CD8-positive, alpha-beta T cell (primary cell): ENCODE measurements at regions of chr17 and their contacts with region 1.

Region 1: DNA sequence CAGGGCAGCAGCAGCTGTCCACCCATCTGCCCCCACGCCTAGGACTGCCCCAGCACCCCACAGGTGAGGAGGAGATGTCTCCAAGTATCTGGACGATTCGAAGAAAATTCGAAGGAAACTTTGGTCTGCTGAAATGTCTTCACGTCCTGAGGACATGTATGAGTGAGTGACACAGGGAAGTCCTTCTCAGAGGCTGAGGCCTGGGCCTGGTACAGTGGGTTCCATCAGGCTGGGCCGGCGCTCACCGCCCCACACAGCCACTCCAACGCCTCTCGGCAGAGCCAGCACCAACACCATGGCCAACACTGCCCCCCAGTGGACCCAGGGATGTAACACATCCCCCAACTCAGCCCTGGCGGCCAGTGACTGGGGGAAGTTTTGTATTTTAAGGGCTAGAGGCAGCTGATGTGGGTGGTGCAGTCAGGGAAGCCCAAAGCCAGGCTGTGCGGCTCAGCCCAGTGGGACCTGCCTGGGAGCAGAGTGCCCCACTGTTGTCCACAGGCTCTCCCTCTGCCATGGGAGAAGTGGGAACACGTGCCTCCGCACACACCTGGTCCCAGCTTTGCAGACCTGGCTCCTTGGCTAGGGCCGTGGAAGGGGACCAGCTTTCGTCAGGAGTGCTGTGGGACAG is 55.8 kb upstream of the FASN start:
- DNase-seq: peak; percentile 71 to 92 (median 84)
- ATAC-seq: peak; percentile 100
- H3K4me3 ChIP-seq: no peak overlapping the region
- H3K4me3 Mint-ChIP-seq: no peak overlapping the region
- H3K27ac ChIP-seq: no peak overlapping the region
- H3K27ac Mint-ChIP-seq: peak overlapping the region; percentile 57
- H3K4me1 ChIP-seq: peaks cover 7% of the 10 kb centered on the region
- H3K4me1 Mint-ChIP-seq: peaks cover 5% of the 10 kb centered on the region
- H3K27me3 ChIP-seq: no peaks in the 10 kb centered on the region
- H3K27me3 Mint-ChIP-seq: no peaks in the 10 kb centered on the region
- CTCF ChIP-seq: peak; percentile 98

Region 2: GRCh38 chr17:82051776-82052637 is 101.9 kb before region 1 on chr17 and contains the starts of genes GPS1 and RFNG:
- CTCF ChIA-PET with region 1: interaction called, 4 read pairs
- POLR2A ChIA-PET with region 1: no interaction called
- intact Hi-C with region 1: loop called in 1 of 2 experiments (anchors 1 kb)
- DNase-seq: peak; percentile 49 to 87 (median 82)
- ATAC-seq: peak; percentile 92
- H3K4me3 ChIP-seq: peak within 1 kb of the TSS; percentile 63 to 67
- H3K4me3 Mint-ChIP-seq: peak within 1 kb of the TSS; percentile 83
- H3K27ac ChIP-seq: peak within 1 kb of the TSS; percentile 25 to 30
- H3K27ac Mint-ChIP-seq: peak within 1 kb of the TSS; percentile 72
- H3K4me1 ChIP-seq: peaks cover 29% of the 10 kb centered on the region
- H3K4me1 Mint-ChIP-seq: peaks cover 18% of the 10 kb centered on the region
- H3K27me3 ChIP-seq: no peaks in the 10 kb centered on the region
- H3K27me3 Mint-ChIP-seq: no peaks in the 10 kb centered on the region
- CTCF ChIP-seq: no peak
- total RNA-seq, gene GPS1: 72.0 to 72.8 TPM
- total RNA-seq, gene RFNG: 26.2 to 27.2 TPM

Region 3: GRCh38 chr17:82105882-82106687 is 47.8 kb before region 1 on chr17:
- CTCF ChIA-PET with region 1: interaction called, 11 read pairs
- POLR2A ChIA-PET with region 1: interaction called, 4 read pairs
- intact Hi-C with region 1: no loop called
- DNase-seq: peak in 8 of 9 experiments; percentile 38 to 80 (median 60)
- ATAC-seq: peak; percentile 65
- H3K4me3 ChIP-seq: peak overlapping the region; percentile 59 to 64
- H3K4me3 Mint-ChIP-seq: peak overlapping the region; percentile 87
- H3K27ac ChIP-seq: peak overlapping the region; percentile 65 to 89
- H3K27ac Mint-ChIP-seq: peak overlapping the region; percentile 96
- H3K4me1 ChIP-seq: peaks cover 22% of the 10 kb centered on the region
- H3K4me1 Mint-ChIP-seq: peaks cover 23% of the 10 kb centered on the region
- H3K27me3 ChIP-seq: no peaks in the 10 kb centered on the region
- H3K27me3 Mint-ChIP-seq: no peaks in the 10 kb centered on the region
- CTCF ChIP-seq: peak; percentile 28

Region 4: DNA sequence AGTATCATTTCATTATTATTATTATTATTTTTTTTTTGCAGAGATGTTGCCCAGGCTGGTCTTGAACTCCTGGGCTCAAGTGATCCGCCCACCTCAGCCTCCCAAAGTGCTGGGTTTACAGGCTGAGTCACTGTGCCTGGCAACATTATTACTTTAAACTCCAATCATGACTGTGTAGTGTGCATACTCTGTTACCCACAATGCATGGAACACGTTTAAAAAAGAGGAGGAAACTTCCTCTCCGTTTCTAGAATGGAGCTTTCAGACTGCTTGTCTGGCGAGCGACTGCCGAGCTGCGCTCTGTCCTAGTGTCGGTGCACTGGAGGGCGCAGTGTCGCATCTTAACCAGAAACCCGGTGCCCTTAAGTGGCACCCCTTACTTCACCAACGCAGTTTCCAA is 33.7 kb before region 1 on chr17:
- CTCF ChIA-PET with region 1: interaction called, 34 read pairs
- POLR2A ChIA-PET with region 1: no interaction called
- intact Hi-C with region 1: loop called (anchors 1 kb)
- DNase-seq: peak in 3 of 9 experiments; percentile 26 to 76 (median 40)
- ATAC-seq: peak; percentile 88
- H3K4me3 ChIP-seq: no peak overlapping the region
- H3K4me3 Mint-ChIP-seq: peak overlapping the region; percentile 56
- H3K27ac ChIP-seq: no peak overlapping the region
- H3K27ac Mint-ChIP-seq: peak overlapping the region; percentile 87
- H3K4me1 ChIP-seq: peaks cover 58% of the 10 kb centered on the region
- H3K4me1 Mint-ChIP-seq: peaks cover 59% of the 10 kb centered on the region
- H3K27me3 ChIP-seq: no peaks in the 10 kb centered on the region
- H3K27me3 Mint-ChIP-seq: no peaks in the 10 kb centered on the region
- CTCF ChIP-seq: peak; percentile 33

Region 5: GRCh38 chr17:82205719-82206508 is 52.1 kb after region 1 on chr17:
- CTCF ChIA-PET with region 1: no interaction called
- POLR2A ChIA-PET with region 1: no interaction called
- intact Hi-C with region 1: no loop called
- DNase-seq: peak; percentile 61 to 91 (median 82)
- ATAC-seq: peak; percentile 83
- H3K4me3 ChIP-seq: no peak overlapping the region
- H3K4me3 Mint-ChIP-seq: peak overlapping the region; percentile 60
- H3K27ac ChIP-seq: peak overlapping the region; percentile 56 to 89
- H3K27ac Mint-ChIP-seq: peak overlapping the region; percentile 96
- H3K4me1 ChIP-seq: peaks cover 24% of the 10 kb centered on the region
- H3K4me1 Mint-ChIP-seq: peaks cover 40% of the 10 kb centered on the region
- H3K27me3 ChIP-seq: no peaks in the 10 kb centered on the region
- H3K27me3 Mint-ChIP-seq: no peaks in the 10 kb centered on the region
- CTCF ChIP-seq: peak; percentile 88